Aorta (tissue), 5 donors: ENCODE measurements at regions of chr19 and their contacts with region 1.

Region 1: GRCh38 chr19:4638828-4639530 is at the start of gene TNFAIP8L1:
- DNase-seq: peak; percentile 97 to 98
- ATAC-seq: peak; percentile 95
- H3K4me3 ChIP-seq: peak within 1 kb of the TSS; percentile 2 to 10
- H3K27ac ChIP-seq: no peak within 1 kb of the TSS
- H3K4me1 ChIP-seq: no peaks in the 10 kb centered on the region
- H3K27me3 ChIP-seq: no peaks in the 10 kb centered on the region
- total RNA-seq, gene TNFAIP8L1: 5.4 to 13.5 TPM

Region 2: GRCh38 chr19:4557971-4558941 is 80.7 kb before region 1 on chr19:
- intact Hi-C with region 1: loop called (anchors 5 kb)
- DNase-seq: no peak
- ATAC-seq: no peak
- H3K4me3 ChIP-seq: no peak overlapping the region
- H3K27ac ChIP-seq: no peak overlapping the region
- H3K4me1 ChIP-seq: no peaks in the 10 kb centered on the region
- H3K27me3 ChIP-seq: no peaks in the 10 kb centered on the region

Region 3: DNA sequence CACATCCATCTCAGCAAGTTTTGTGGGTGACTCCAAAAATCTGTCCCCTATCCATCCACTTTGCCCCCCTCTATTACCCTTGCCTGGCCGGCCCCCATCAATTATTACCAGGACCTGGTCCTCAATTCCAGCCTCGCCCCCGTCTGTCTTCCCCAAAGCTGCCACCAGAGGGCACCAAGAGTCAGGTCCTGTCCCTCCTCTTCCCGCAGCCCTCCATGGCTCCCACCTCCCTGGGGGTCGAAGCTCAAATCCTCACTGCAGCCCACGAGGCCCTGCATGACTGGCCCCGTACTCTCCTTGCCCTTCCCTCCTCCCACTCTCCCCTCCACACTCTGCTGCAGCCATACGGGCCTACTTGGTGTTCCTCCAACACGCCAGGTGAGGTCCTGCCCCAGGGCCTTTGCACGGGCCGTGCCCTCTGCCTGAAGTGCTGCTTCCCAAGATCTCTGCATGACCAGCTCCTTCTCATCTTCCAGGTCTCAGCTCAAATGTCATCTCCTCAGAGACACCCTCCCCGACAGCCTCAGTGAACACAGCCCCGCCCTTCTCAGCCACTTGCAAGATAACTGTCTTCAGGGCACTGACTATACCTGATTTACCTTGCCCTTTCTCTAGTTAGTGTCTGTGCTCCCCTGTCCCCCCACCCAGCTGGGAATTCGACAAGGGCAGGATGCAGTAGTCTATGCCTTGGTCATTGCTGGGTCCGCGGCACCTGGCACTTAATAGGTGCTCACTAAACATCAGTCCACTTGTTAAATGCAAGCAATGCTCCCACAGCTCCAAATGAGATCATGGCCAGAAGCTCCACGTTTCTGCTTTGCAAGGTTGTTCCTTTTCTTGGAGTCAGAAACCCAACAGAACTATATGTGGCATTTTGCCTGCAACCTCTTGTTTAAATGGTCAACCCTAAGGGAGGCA is 62.7 kb before region 1 on chr19:
- intact Hi-C with region 1: loop called in 1 of 2 experiments (anchors 1 kb)
- DNase-seq: peak in 1 of 2 donors; percentile 87
- ATAC-seq: peak; percentile 69
- H3K4me3 ChIP-seq: no peak overlapping the region
- H3K27ac ChIP-seq: no peak overlapping the region
- H3K4me1 ChIP-seq: no peaks in the 10 kb centered on the region
- H3K27me3 ChIP-seq: no peaks in the 10 kb centered on the region

Region 4: DNA sequence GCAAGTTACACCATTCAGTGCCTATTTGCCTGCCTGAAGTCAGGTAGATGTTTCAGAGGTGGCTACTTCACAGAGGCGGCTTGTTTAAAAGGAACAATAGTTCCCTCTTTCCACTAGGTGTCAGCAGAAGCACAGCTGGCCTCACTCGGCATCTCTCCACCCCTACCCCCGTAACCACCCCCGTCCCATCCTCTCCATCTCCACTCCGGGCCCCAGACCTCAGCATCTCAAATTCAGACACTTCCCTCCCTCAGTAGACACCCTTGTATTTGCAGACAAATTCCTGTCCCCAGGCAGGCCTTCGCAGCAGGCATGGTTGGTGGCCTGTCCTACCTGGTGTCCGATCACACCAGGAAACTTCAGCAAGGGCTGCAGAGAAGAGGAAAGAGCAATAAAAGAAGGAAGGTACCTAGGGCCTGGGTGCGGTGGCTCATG is 93.7 kb after region 1 on chr19:
- intact Hi-C with region 1: no loop called
- DNase-seq: no peak
- ATAC-seq: peak; percentile 79
- H3K4me3 ChIP-seq: no peak overlapping the region
- H3K27ac ChIP-seq: no peak overlapping the region
- H3K4me1 ChIP-seq: no peaks in the 10 kb centered on the region
- H3K27me3 ChIP-seq: no peaks in the 10 kb centered on the region